Activated CD4-positive, alpha-beta memory T cell treated with anti-CD3 and anti-CD28 coated beads for 36 hours (primary cell): ENCODE measurements at regions of chr16 and their contacts with region 1.

Region 1: DNA sequence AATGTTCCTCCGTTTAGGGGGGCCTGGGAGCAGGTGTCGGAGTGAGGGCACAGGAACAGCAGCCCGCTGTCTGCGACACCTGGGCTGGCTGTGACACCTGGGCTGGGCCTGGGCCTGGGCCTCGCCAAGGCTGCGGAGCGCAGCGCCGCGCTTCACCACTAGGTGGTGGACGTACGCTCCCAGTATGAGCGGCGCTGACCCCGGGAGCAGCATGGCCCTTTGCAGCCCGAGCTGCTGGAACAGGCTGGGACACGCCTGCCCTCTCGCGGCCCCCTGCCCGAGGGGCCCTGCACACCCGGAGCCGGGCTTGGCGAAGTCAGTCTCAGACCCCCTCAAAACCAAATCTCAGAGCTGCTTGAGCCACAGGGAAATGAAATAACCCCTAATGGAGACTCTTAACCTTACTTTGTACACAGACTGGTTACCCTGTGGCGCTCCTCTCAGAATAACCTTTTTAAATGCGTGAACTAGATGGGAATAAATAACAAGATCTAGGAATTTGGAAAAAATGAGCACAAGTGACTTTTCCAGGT is 38.6 kb upstream of the FA2H start:
- DNase-seq: peak; percentile 81
- H3K4me3 Mint-ChIP-seq: no peak overlapping the region
- H3K27ac Mint-ChIP-seq: no peak overlapping the region
- H3K4me1 Mint-ChIP-seq: no peaks in the 10 kb centered on the region
- H3K27me3 Mint-ChIP-seq: no peaks in the 10 kb centered on the region

Region 2: DNA sequence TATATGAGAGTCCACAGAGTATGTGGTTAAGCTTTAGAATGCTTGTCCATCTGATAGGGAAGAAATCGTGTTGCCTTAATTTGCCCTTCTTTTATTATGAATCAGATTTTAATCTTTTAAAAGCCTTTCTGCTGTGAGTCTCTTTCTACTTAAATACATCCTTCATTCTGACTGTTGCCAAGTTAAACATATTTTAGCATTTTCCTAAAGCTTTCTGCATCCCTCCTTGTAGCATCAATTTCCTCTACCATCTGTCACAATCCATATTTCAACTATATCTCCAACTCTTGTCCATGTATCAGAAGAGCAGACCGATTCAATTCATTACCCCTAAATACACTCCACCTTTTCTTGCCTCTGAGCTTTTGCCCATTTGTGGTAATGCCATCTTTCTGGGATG is 18.1 kb before region 1 on chr16:
- CTCF ChIA-PET with region 1: interaction called, 12 read pairs
- POLR2A ChIA-PET with region 1: no interaction called
- intact Hi-C with region 1: no loop called
- DNase-seq: no peak
- H3K4me3 Mint-ChIP-seq: no peak overlapping the region
- H3K27ac Mint-ChIP-seq: no peak overlapping the region
- H3K4me1 Mint-ChIP-seq: no peaks in the 10 kb centered on the region
- H3K27me3 Mint-ChIP-seq: peaks cover 26% of the 10 kb centered on the region

Region 3: GRCh38 chr16:74862741-74863244 is 49.6 kb after region 1 on chr16:
- CTCF ChIA-PET with region 1: interaction called, 43 read pairs
- POLR2A ChIA-PET with region 1: no interaction called
- intact Hi-C with region 1: loop called (anchors 1 kb)
- DNase-seq: peak; percentile 29
- H3K4me3 Mint-ChIP-seq: no peak overlapping the region
- H3K27ac Mint-ChIP-seq: no peak overlapping the region
- H3K4me1 Mint-ChIP-seq: peaks cover 4% of the 10 kb centered on the region
- H3K27me3 Mint-ChIP-seq: no peaks in the 10 kb centered on the region

Region 4: DNA sequence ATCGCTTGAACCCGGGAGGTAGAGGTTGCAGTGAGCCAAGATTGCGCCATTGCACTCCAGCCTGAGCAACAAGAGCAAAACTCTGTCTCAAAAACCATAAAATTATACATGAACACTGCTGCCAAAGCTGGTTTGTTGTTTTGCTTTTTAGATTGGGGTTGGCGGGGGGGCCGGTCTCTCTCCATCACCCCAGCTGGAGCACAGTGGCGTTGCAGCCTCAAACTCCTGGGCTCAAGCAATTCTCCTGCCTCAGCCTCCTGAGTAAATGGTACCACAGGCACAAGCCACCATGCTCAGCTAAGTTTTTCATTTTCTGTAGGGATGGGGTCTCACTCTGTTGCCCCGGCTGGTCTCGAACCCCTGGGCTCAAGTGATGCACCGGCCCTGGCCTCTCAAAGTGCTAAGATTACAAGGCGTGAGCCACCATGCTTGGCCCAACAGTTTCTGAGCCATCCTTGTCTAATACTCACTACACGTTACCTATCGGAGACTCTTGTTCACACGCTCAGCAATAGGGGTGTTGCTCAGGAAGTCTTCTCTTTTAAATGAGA is 160.1 kb after region 1 on chr16:
- CTCF ChIA-PET with region 1: no interaction called
- POLR2A ChIA-PET with region 1: no interaction called
- intact Hi-C with region 1: no loop called
- DNase-seq: no peak
- H3K4me3 Mint-ChIP-seq: no peak overlapping the region
- H3K27ac Mint-ChIP-seq: no peak overlapping the region
- H3K4me1 Mint-ChIP-seq: peaks cover 5% of the 10 kb centered on the region
- H3K27me3 Mint-ChIP-seq: no peaks in the 10 kb centered on the region